ENCODE measurements at regions of chr21 and their contacts with region 1.

Region 1: GRCh38 chr21:42164064-42164789 is 54.7 kb upstream of the ABCG1 start:
- DNase-seq: peak; percentile 65 to 82
- ATAC-seq: peak; percentile 74 to 94 (median 91)
- H3K4me3 ChIP-seq: no peak overlapping the region
- H3K27ac ChIP-seq: peak overlapping the region in 2 of 10 donors; percentile 12 to 30
- H3K4me1 ChIP-seq: peaks cover 0 to 15% (median 5%) of the 10 kb centered on the region in 9 donors
- H3K27me3 ChIP-seq: peaks cover 0 to 7% (median 0%) of the 10 kb centered on the region in 7 donors
- CTCF ChIP-seq: peak; percentile 38 to 76 (median 66)

Region 2: GRCh38 chr21:42107881-42108553 is 56.2 kb before region 1 on chr21:
- intact Hi-C with region 1: no loop called
- DNase-seq: peak; percentile 39 to 66
- ATAC-seq: peak; percentile 79 to 95 (median 91)
- H3K4me3 ChIP-seq: no peak overlapping the region
- H3K27ac ChIP-seq: no peak overlapping the region
- H3K4me1 ChIP-seq: peaks cover 0 to 15% (median 7%) of the 10 kb centered on the region in 9 donors
- H3K27me3 ChIP-seq: peaks cover 0 to 55% (median 7%) of the 10 kb centered on the region in 7 donors
- CTCF ChIP-seq: peak in 8 of 9 donors; percentile 52 to 82 (median 66)

Region 3: GRCh38 chr21:42199488-42200458 is 35.5 kb after region 1 on chr21:
- intact Hi-C with region 1: no loop called
- DNase-seq: no peak
- ATAC-seq: peak; percentile 77 to 93 (median 86)
- H3K4me3 ChIP-seq: no peak overlapping the region
- H3K27ac ChIP-seq: peak overlapping the region in 4 of 10 donors; percentile 26 to 74 (median 56)
- H3K4me1 ChIP-seq: peaks cover 3 to 39% (median 15%) of the 10 kb centered on the region in 9 donors
- H3K27me3 ChIP-seq: no peaks in the 10 kb centered on the region
- CTCF ChIP-seq: no peak

Region 4: DNA sequence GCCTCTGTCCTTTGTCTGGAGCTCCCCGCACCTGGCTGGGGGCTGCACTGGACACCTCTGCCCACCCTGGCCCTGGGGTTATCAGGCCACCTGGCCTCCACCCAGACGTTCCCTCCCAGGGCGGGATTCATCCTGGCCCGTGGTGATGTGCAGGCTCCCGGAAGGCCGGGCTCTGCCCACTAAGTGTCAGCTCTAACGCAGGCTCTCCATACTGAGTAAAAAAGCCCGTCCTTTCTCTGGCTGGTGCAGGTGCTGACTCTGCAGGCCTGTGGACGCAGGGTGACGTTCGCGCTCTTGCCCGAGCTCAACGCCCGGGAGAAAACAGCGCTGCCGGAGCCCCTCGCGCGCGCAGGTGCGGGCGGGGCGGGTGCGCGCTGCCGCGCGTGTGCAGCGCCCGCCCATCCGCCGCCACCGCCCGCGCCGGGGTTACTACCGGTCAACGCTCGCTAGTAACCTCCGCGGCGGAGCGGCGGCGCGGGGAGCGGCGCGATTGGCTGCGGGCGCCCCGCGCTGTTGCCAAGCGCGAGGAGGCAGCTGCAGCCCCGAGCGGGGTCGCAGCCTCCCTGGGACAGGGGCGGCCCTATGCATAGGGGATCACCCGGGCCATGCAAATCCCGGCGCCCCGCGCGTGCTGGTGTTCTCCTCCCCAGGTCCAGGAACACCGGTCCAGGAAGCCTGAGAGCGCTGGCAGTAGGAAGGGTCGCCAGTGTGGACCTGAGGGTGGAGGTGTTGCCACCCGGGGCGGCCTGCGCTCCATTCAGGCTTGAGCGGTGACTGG is 70.4 kb after region 1 on chr21:
- intact Hi-C with region 1: loop called in 1 of 10 experiments (anchors 5 kb)
- DNase-seq: peak; percentile 66 to 82
- ATAC-seq: peak; percentile 57 to 78 (median 67)
- H3K4me3 ChIP-seq: peak overlapping the region in 9 of 10 donors; percentile 42 to 69 (median 56)
- H3K27ac ChIP-seq: peak overlapping the region; percentile 67 to 93 (median 88)
- H3K4me1 ChIP-seq: peaks cover 51 to 97% (median 90%) of the 10 kb centered on the region in 9 donors
- H3K27me3 ChIP-seq: no peaks in the 10 kb centered on the region
- CTCF ChIP-seq: no peak

Region 5: DNA sequence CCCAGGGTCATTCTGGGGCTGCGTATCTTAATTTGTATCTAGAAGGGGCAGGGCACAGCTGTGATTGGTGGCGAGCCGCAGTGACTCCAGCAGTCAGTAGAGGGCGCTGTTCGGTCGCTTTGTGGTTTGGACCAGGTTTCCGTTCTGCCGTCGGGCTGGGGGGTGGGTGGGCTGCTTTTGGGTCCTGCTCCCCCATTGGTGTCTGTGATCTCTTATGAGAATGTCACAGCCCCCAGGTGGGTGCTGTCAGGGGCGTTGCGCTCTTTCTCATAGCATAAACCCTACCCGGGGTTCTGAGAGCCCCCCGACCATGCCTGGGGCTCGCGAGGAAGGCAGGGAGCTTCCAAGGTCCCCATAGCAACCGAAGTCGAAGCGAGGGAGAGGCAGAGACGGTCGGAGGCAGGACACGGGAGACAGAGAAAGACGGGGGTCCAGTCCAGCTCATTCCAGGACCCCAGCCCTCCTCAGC is 145.6 kb after region 1 on chr21:
- intact Hi-C with region 1: loop called in 3 of 10 experiments (anchors 10 kb)
- DNase-seq: peak; percentile 37 to 50
- ATAC-seq: peak in 7 of 8 donors; percentile 36 to 66 (median 48)
- H3K4me3 ChIP-seq: no peak overlapping the region
- H3K27ac ChIP-seq: no peak overlapping the region
- H3K4me1 ChIP-seq: peaks cover 0 to 31% (median 24%) of the 10 kb centered on the region in 9 donors
- H3K27me3 ChIP-seq: peaks cover 0 to 53% (median 15%) of the 10 kb centered on the region in 7 donors
- CTCF ChIP-seq: peak; percentile 54 to 78 (median 75)

Region 6: DNA sequence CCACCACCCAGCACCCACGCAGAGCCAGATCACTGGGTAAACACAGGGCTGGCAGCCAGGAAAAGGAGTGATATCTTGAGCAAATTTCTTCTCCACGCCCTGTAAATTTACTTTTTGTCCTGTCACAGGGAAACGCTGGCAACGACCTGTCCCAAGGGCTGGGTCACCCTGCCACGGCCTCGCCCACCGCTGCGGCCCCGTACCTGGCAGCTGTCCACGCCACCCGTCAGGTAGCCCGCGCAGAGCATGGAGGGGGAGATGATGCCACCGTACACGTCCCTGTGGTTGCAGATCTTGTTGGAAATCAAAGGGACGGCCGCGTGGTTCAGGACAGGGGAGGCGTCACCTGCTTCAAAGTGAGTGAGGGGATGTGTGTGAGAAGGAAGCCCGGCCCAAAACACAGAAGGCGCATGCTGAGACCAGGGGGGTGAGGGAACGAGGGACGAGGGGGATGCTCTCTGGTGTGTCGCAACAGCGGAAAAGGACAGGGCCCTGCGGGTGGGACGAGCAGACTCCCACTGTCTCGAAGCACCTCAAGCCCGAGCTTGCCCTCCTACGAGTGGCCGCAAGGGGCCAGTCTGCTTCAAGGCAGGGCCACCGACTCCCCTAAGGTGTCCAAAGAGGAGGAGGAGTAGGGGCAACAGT is 212.2 kb after region 1 on chr21:
- intact Hi-C with region 1: no loop called
- DNase-seq: peak in 1 of 2 donors; percentile 14
- ATAC-seq: no peak
- H3K4me3 ChIP-seq: no peak overlapping the region
- H3K27ac ChIP-seq: no peak overlapping the region
- H3K4me1 ChIP-seq: no peaks in the 10 kb centered on the region
- H3K27me3 ChIP-seq: peaks cover 0 to 65% (median 30%) of the 10 kb centered on the region in 7 donors
- CTCF ChIP-seq: peak in 2 of 9 donors; percentile 45 to 60

Region 7: GRCh38 chr21:42454786-42455580 is 290.8 kb after region 1 on chr21:
- intact Hi-C with region 1: loop called in 2 of 10 experiments (anchors 1 to 5 kb)
- DNase-seq: no peak
- ATAC-seq: no peak
- H3K4me3 ChIP-seq: no peak overlapping the region
- H3K27ac ChIP-seq: no peak overlapping the region
- H3K4me1 ChIP-seq: peaks cover 0 to 7% (median 0%) of the 10 kb centered on the region in 9 donors
- H3K27me3 ChIP-seq: peaks cover 0 to 16% (median 3%) of the 10 kb centered on the region in 7 donors
- CTCF ChIP-seq: no peak